ENCODE measurements at regions of chr6 and their contacts with region 1.

Region 1: DNA sequence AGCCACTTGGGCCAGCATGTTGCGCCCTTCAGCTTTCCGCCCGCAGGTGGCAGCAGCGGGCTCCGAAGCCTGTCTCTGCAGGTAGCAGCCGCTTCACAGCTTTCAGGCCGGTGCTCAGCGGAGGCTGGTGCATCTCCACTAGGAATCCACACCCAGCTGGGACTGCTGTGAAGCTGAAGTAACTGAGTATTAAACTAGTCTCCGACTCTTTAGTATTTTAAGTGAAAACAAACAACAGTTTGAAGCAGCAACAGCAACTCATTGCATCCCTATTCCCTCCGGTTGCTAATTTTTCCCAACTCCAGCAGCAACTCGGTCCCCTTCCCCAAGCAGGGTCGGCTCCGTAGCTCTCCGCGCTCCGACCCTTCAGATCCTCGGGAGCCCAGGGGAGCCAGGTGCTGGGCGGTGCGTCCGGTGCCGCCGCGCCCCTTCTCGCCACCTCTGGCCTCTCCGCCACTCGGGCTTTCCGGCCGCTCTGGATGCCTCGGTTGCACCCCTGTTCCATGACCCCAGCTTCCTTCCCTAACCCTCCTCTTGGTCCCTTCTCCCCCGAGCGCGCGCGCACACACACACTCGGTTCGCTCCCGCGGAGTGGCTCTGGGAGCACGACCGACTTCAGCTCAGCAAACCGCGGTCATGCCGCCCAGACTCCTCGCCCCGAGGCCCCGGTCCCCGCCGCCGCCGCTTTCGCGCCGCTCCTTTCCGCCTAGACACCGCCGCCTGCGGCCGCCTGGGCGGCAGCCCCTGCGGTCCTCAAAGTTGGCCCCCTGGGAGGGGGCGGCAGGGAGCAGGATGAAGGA is 768 bp upstream of the NKAIN2 start:
- DNase-seq: peak; percentile 77
- H3K4me3 ChIP-seq: peak overlapping the region; percentile 16 to 34
- H3K27ac ChIP-seq: no peak overlapping the region
- H3K4me1 ChIP-seq: peaks cover 5% of the 10 kb centered on the region
- H3K27me3 ChIP-seq: no peaks in the 10 kb centered on the region
- CTCF ChIP-seq: peak; percentile 47 to 76 (median 74)
- POLR2A ChIP-seq: no peak

Region 2: GRCh38 chr6:123875784-123876183 is 72.9 kb after region 1 on chr6:
- intact Hi-C with region 1: no loop called
- DNase-seq: no peak
- H3K4me3 ChIP-seq: no peak overlapping the region
- H3K27ac ChIP-seq: no peak overlapping the region
- H3K4me1 ChIP-seq: no peaks in the 10 kb centered on the region
- H3K27me3 ChIP-seq: no peaks in the 10 kb centered on the region
- CTCF ChIP-seq: no peak
- POLR2A ChIP-seq: no peak

Region 3: GRCh38 chr6:124795643-124796463 is 993.0 kb after region 1 on chr6:
- intact Hi-C with region 1: loop called (anchors 10 kb)
- DNase-seq: peak; percentile 11
- H3K4me3 ChIP-seq: no peak overlapping the region
- H3K27ac ChIP-seq: no peak overlapping the region
- H3K4me1 ChIP-seq: no peaks in the 10 kb centered on the region
- H3K27me3 ChIP-seq: no peaks in the 10 kb centered on the region
- CTCF ChIP-seq: peak in 3 of 4 experiments; percentile 19 to 53 (median 29)
- POLR2A ChIP-seq: no peak

Measured in prostate gland (tissue), 2 donors.